ENCODE measurements at regions of chr4 and their contacts with region 1.

Region 1: DNA sequence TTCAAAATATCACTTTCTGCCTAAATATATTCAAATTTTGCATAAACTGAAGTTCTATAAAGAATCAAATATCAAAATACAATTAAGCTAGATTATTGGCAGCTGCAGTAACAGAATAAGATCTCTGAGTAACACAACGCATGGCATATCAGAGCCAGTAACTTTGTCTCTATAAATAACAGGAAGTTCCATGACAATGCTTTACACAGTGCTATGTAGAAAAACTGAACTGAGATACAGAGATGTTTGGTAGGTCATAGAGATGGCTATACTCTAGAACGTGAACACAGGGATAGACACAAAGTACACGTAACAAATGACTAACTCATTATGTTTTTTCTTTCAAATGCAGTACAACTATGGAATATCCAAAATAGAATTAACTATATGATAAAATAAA is 18.2 kb downstream of the UBE2D3 start:
- H3K4me3 Mint-ChIP-seq: no peak overlapping the region
- H3K27ac Mint-ChIP-seq: no peak overlapping the region
- H3K4me1 Mint-ChIP-seq: peaks cover 48% of the 10 kb centered on the region
- H3K27me3 Mint-ChIP-seq: no peaks in the 10 kb centered on the region

Region 2: GRCh38 chr4:102657206-102657605 is 152.0 kb before region 1 on chr4:
- intact Hi-C with region 1: loop called (anchors 10 kb)
- H3K4me3 Mint-ChIP-seq: no peak overlapping the region
- H3K27ac Mint-ChIP-seq: no peak overlapping the region
- H3K4me1 Mint-ChIP-seq: no peaks in the 10 kb centered on the region
- H3K27me3 Mint-ChIP-seq: no peaks in the 10 kb centered on the region

Region 3: GRCh38 chr4:102760645-102761295 is 48.4 kb before region 1 on chr4 and contains the start of gene MANBA:
- intact Hi-C with region 1: loop called (anchors 5 kb)
- H3K4me3 Mint-ChIP-seq: peak within 1 kb of the TSS; percentile 82
- H3K27ac Mint-ChIP-seq: peak within 1 kb of the TSS; percentile 96
- H3K4me1 Mint-ChIP-seq: peaks cover 49% of the 10 kb centered on the region
- H3K27me3 Mint-ChIP-seq: peaks cover 6% of the 10 kb centered on the region

Region 4: GRCh38 chr4:103008875-103009729 is 199.9 kb after region 1 on chr4:
- intact Hi-C with region 1: loop called (anchors 5 kb)
- H3K4me3 Mint-ChIP-seq: no peak overlapping the region
- H3K27ac Mint-ChIP-seq: no peak overlapping the region
- H3K4me1 Mint-ChIP-seq: no peaks in the 10 kb centered on the region
- H3K27me3 Mint-ChIP-seq: no peaks in the 10 kb centered on the region

Measured in dendritic cell treated with granulocyte-macrophage colony-stimulating factor and Interleukin-4, amounts not matched to agents 40 ng/mL and 50 ng/mL, for 4 days (primary cell).